Cardiac septum (tissue), 1 donor: ENCODE measurements at regions of chr1 and their contacts with region 1.

Region 1: DNA sequence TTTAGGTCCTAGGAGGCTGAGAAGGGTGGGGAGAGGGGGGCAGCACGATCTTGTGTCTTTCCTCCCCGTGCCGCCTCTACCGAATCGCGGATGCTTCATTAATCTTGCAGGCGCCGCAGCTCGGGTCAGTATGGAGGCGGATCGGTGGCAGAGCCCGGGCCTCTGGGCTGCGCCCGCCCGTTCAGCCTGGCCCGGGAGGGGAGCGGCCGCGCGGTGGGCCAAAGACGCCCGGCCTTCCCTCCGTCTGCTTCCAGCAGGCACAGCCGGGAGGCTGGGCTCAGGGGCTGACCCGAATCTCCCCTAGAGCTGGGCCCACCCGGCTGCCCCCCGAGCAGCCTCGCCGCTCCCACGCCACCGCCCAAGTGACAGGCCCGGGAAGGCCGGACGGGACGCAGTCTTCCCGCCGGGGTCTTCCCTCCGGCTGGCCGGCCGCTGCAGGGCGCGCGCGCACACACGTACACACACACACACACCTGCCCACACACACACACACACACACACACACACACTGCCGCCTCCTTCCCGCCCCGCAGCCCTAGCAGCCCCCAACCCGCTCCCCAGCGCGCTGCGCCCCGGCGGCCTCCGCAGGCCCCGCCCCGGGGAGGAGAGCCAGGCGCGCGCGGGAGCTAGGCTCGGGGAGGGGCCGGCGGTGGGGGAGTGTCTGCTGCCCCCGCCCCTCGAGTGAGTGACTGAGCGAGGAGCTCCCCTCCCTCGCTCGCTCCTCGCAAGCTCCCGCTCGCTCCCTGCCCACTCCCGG is at the start of gene C1orf21:
- DNase-seq: peak; percentile 91
- total RNA-seq, gene C1orf21: 93.6 TPM

Region 2: DNA sequence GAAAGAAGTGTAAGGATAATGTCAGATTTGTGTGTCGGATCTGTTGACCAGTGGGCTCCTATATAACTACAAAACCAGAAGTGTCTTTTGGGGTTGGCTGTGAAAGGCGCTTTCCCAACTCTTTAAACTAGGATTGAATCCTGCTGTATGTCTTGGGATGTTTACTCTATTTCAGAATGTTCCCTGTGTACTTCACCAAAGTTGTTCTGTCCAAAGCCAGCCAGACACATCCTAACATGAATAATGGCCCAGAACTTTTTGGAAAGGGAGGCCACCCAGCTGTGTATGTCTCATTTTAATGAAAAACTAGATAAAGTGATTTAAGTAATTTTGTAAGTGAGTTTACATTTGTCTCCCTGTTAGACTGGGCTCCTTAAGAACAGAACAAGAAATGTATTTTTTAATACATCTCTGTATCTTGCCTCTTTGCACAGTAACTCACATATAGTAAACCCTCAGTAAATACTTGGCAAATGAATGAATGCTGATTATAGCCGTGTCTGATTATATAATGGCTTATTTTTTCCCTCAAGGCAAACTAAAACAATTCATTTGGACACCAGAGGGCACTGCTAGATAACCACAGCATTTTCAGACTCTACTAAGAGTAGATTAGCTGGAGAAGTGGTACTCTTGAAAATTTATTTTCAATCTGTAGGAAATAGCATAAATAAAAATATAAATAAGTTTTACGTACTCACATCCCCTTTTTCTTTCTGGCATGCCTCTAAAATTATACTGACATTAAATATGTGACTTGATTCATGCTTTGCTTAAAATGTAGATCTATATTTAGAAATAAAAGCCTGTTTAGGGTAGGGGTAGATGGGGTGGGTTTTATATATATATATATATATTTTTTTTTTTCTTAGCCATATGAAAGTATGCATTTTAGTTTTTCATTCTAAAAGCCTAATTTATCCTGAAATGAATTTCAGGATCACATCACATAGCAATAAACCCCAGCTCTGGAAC is 311.1 kb before region 1 on chr1:
- intact Hi-C with region 1: loop called (anchors 10 kb)
- DNase-seq: no peak

Region 3: DNA sequence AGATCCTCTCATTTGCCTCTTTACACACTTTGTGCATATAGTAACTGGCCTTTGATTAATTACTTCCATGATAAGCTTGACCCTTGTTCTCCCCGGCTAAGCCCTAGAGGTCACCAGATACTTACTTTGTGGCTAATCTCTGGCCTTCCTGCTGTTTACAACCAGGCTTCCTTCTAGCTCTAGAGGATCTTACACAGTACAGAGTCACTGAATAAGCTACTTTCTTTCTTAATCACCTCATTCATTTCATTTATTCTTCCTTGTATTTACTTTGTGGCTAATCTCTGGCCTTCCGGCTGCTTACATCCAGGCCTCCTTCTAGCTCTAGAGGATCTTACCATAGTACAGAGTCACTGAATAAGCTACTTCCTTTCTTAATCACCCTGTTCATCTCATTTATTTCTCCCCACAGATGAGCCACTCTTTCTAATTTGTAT is 144.0 kb before region 1 on chr1:
- intact Hi-C with region 1: loop called (anchors 5 kb)
- DNase-seq: no peak

Region 4: GRCh38 chr1:184465489-184466146 is 79.1 kb after region 1 on chr1:
- intact Hi-C with region 1: loop called (anchors 5 kb)
- DNase-seq: no peak

Region 5: DNA sequence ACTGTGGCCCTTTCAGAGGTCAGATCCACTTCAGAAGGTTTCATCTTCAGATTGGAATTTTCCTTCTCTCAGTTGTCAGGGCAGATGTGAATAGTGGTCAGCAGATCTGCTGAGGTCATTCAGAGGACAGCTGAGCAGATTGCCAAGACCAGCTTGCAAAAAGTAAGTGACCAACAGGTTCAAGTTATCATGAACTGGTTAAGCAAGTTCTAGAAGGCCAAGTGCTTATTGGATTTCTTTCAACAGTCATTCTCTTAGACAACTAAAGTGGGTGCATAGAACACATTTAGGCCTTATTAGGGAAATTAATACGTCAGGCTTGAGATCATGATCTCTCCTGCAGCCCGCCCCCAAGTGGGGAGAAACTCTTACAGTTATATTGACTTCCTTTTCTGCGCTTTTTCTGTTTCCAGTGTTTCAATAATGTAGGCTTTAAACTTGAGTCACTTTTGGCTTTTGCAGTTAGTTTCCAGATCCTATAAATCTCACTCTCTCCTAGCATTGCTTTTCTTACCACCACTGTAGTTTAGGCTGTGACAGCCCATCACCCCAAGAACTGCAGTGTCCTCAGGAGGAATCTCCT is 96.7 kb after region 1 on chr1:
- intact Hi-C with region 1: loop called (anchors 5 kb)
- DNase-seq: no peak

Region 6: GRCh38 chr1:184664042-184664655 is 277.7 kb after region 1 on chr1:
- intact Hi-C with region 1: loop called (anchors 2 kb)
- DNase-seq: peak; percentile 84